Endothelial cell of umbilical vein (primary cell): ENCODE measurements at regions of chr12 and their contacts with region 1.

Region 1: DNA sequence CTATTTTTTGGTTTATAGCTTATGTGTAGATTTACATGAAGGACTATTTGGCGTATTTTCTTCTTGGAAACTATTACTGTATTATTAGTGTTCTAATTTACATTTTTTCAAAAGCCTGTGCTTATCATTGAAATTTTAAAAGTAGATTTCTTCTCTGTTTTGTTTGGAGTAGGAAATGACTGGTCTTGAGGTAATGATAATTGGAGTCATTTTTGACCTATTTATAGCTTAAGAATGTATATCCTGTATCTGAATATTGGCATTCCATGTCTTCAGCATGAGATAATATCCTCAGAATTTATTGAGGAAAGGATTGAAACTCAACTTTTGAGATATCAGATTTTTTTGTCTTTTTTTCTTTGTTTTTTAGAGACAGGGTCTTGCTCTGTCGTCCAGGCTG is 193.4 kb downstream of the ERC1 start:
- DNase-seq: peak; percentile 61
- H3K4me3 ChIP-seq: no peak overlapping the region
- H3K27ac ChIP-seq: peak overlapping the region; percentile 74
- H3K4me1 ChIP-seq: peaks cover 21% of the 10 kb centered on the region
- H3K27me3 ChIP-seq: no peaks in the 10 kb centered on the region
- CTCF ChIP-seq: no peak
- POLR2A ChIP-seq: no peak

Region 2: GRCh38 chr12:1083889-1084262 is 100.5 kb before region 1 on chr12:
- CTCF ChIA-PET with region 1: no interaction called
- POLR2A ChIA-PET with region 1: no interaction called
- dilution Hi-C with region 1: no loop called
- intact Hi-C with region 1: no loop called
- DNase-seq: no peak
- H3K4me3 ChIP-seq: no peak overlapping the region
- H3K27ac ChIP-seq: no peak overlapping the region
- H3K4me1 ChIP-seq: no peaks in the 10 kb centered on the region
- H3K27me3 ChIP-seq: no peaks in the 10 kb centered on the region
- CTCF ChIP-seq: no peak
- POLR2A ChIP-seq: no peak

Region 3: GRCh38 chr12:1171657-1172408 is 12.6 kb before region 1 on chr12:
- CTCF ChIA-PET with region 1: interaction called, 4 read pairs
- POLR2A ChIA-PET with region 1: interaction called, 4 read pairs
- dilution Hi-C with region 1: no loop called
- intact Hi-C with region 1: loop called (anchors 1 kb)
- DNase-seq: peak; percentile 94
- H3K4me3 ChIP-seq: no peak overlapping the region
- H3K27ac ChIP-seq: peak overlapping the region; percentile 34
- H3K4me1 ChIP-seq: peaks cover 17% of the 10 kb centered on the region
- H3K27me3 ChIP-seq: no peaks in the 10 kb centered on the region
- CTCF ChIP-seq: no peak
- POLR2A ChIP-seq: peak; percentile 25

Region 4: DNA sequence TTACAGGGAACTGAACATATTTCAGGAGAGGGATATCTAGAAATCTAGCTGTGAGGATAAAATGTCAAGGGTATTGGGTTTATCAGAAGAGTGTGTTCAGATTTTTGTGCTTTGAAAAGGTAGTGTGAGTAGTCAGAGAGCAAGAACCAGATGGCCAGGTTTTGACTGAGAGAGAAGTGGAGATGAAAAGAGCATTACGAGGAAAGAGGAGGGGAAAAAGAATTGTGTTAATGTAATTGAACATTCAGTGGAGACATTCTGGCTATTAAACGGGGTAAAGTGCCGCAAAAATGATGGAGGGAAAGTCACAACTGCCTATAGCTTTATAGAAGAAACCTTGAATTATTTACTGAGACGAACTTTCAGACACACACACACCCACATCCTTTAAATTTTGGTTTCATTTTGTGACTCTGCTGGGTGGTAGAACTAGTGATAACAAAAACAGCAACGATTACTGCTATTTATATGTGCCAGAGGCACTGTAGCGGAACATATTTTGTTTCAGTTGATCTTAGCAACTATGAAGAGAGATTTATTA is 20.2 kb after region 1 on chr12:
- CTCF ChIA-PET with region 1: interaction called, 10 read pairs
- POLR2A ChIA-PET with region 1: no interaction called
- dilution Hi-C with region 1: no loop called
- intact Hi-C with region 1: loop called (anchors 1 kb)
- DNase-seq: peak; percentile 74
- H3K4me3 ChIP-seq: peak overlapping the region; percentile 36 to 88 (median 77)
- H3K27ac ChIP-seq: peak overlapping the region; percentile 75
- H3K4me1 ChIP-seq: peaks cover 36% of the 10 kb centered on the region
- H3K27me3 ChIP-seq: no peaks in the 10 kb centered on the region
- CTCF ChIP-seq: no peak
- POLR2A ChIP-seq: no peak